CD8-positive, alpha-beta memory T cell (primary cell): ENCODE measurements at regions of chr15 and their contacts with region 1.

Region 1: DNA sequence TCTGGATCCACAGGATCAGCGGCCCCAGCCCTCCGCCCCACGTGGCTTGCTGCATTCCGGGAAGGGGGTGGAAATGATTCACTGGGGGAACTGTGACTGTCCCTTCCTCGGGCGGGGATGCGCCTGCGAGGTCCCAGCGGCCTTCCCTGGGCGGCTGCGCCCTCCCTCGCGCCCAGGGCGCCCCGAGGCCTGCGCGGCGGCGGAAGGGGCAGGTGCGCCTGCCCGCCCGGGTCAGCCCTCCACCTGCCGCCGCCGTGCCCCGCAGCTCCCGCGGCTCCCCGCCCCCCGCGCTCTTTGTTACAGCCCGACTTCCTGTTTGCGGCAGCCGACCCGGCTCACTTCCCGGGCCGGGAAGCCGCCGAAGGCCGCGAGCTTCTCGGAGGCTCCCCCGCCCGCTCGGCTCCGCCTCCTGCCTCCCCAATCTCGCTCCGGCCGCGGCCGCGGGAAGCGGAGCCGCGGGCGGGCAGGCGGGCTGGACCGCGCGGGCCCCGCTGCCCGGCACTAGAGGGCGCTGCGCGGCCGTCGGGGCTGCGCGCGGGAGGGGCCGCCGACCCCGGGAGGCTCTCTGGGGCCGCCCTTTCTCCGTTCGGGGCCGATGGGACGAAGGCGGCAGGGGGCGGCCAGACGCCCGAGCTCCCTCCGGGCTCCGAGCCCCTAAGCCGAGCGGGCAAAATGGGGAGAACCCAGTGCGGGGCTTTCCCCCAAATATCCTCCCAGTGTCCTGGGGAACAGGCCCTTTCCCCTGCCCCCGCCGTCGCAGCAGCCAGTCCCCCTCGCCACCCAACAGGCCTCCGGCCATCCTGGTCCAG is 11.5 kb upstream of the CHAC1 start:
- DNase-seq: peak; percentile 57 to 79 (median 70)
- H3K4me3 ChIP-seq: peak overlapping the region; percentile 73
- H3K4me3 Mint-ChIP-seq: peak overlapping the region; percentile 81 to 88 (median 82)
- H3K27ac ChIP-seq: peak overlapping the region; percentile 52
- H3K27ac Mint-ChIP-seq: peak overlapping the region in 5 of 8 donors; percentile 66 to 93 (median 76)
- H3K4me1 ChIP-seq: peaks cover 29% of the 10 kb centered on the region
- H3K4me1 Mint-ChIP-seq: peaks cover 18 to 35% (median 25%) of the 10 kb centered on the region in 3 donors
- H3K27me3 ChIP-seq: no peaks in the 10 kb centered on the region
- H3K27me3 Mint-ChIP-seq: no peaks in the 10 kb centered on the region

Region 2: GRCh38 chr15:40506964-40507571 is 434.7 kb before region 1 on chr15:
- CTCF ChIA-PET with region 1: no interaction called
- POLR2A ChIA-PET with region 1: no interaction called
- DNase-seq: peak; percentile 42 to 76 (median 50)
- H3K4me3 ChIP-seq: no peak overlapping the region
- H3K4me3 Mint-ChIP-seq: peak overlapping the region in 2 of 7 donors; percentile 32 to 52
- H3K27ac ChIP-seq: no peak overlapping the region
- H3K27ac Mint-ChIP-seq: no peak overlapping the region
- H3K4me1 ChIP-seq: peaks cover 5% of the 10 kb centered on the region
- H3K4me1 Mint-ChIP-seq: peaks cover 9 to 27% (median 19%) of the 10 kb centered on the region in 3 donors
- H3K27me3 ChIP-seq: peaks cover 19% of the 10 kb centered on the region
- H3K27me3 Mint-ChIP-seq: peaks cover 49 to 73% of the 10 kb centered on the region in 2 donors

Region 3: DNA sequence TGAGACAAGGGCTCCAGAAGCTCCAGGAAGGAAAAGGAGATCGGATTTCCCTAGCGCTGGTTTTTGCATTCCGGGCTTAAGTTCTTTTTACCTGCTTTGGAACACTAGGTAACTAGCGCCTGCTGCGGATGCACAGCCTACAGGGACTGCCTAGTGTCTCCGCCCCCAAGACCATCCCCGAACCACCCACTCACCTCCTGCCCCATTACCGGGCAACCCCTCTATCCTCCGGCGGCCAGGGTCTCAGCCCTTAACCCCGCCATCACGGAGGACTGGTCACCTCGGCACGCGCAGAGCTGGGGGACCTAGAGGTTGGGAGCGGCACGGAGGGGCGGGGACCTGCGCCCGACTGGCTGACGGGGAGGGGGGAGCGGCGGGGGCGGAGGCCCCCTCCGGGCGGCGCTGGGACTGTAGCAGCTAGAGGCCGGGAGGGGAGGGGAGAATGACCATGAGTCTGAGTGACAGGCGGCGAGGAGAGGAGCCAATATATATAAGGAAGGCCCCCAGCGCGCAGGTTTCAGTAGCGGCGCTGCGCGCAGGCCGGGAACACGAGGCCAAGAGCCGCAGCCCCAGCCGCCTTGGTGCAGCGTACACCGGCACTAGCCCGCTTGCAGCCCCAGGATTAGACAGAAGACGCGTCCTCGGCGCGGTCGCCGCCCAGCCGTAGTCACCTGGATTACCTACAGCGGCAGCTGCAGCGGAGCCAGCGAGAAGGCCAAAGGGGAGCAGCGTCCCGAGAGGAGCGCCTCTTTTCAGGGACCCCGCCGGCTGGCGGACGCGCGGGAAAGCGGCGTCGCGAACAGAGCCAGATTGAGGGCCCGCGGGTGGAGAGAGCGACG is 12.7 kb before region 1 on chr15 and contains the start of gene DLL4:
- CTCF ChIA-PET with region 1: interaction called, 10 read pairs
- POLR2A ChIA-PET with region 1: interaction called, 8 read pairs
- DNase-seq: peak in 3 of 5 donors; percentile 37 to 57 (median 38)
- H3K4me3 ChIP-seq: peak within 1 kb of the TSS; percentile 67
- H3K4me3 Mint-ChIP-seq: peak within 1 kb of the TSS; percentile 77 to 92 (median 82)
- H3K27ac ChIP-seq: no peak within 1 kb of the TSS
- H3K27ac Mint-ChIP-seq: peak within 1 kb of the TSS in 2 of 8 donors; percentile 15 to 70
- H3K4me1 ChIP-seq: peaks cover 37% of the 10 kb centered on the region
- H3K4me1 Mint-ChIP-seq: peaks cover 36 to 68% (median 41%) of the 10 kb centered on the region in 3 donors
- H3K27me3 ChIP-seq: peaks cover 48% of the 10 kb centered on the region
- H3K27me3 Mint-ChIP-seq: peaks cover 52 to 68% of the 10 kb centered on the region in 2 donors
- total RNA-seq, gene DLL4: not detected

Region 4: GRCh38 chr15:40952901-40953712 is 11.4 kb after region 1 on chr15 and contains the start of gene CHAC1:
- CTCF ChIA-PET with region 1: interaction called, 35 read pairs
- POLR2A ChIA-PET with region 1: interaction called, 24 read pairs
- DNase-seq: peak; percentile 89 to 96 (median 93)
- H3K4me3 ChIP-seq: peak within 1 kb of the TSS; percentile 86
- H3K4me3 Mint-ChIP-seq: peak within 1 kb of the TSS; percentile 89 to 96 (median 92)
- H3K27ac ChIP-seq: peak within 1 kb of the TSS; percentile 61
- H3K27ac Mint-ChIP-seq: peak within 1 kb of the TSS; percentile 61 to 89 (median 72)
- H3K4me1 ChIP-seq: peaks cover 16% of the 10 kb centered on the region
- H3K4me1 Mint-ChIP-seq: peaks cover 11 to 20% (median 12%) of the 10 kb centered on the region in 3 donors
- H3K27me3 ChIP-seq: no peaks in the 10 kb centered on the region
- H3K27me3 Mint-ChIP-seq: peaks cover 3 to 5% of the 10 kb centered on the region in 2 donors
- total RNA-seq, gene CHAC1: 15.1 to 16.7 TPM

Region 5: GRCh38 chr15:42215913-42216829 is 1274.4 kb after region 1 on chr15:
- CTCF ChIA-PET with region 1: no interaction called
- POLR2A ChIA-PET with region 1: no interaction called
- DNase-seq: no peak
- H3K4me3 ChIP-seq: no peak overlapping the region
- H3K4me3 Mint-ChIP-seq: no peak overlapping the region
- H3K27ac ChIP-seq: no peak overlapping the region
- H3K27ac Mint-ChIP-seq: peak overlapping the region in 4 of 8 donors; percentile 21 to 74 (median 34)
- H3K4me1 ChIP-seq: no peaks in the 10 kb centered on the region
- H3K4me1 Mint-ChIP-seq: peaks cover 0 to 3% (median 0%) of the 10 kb centered on the region in 3 donors
- H3K27me3 ChIP-seq: no peaks in the 10 kb centered on the region
- H3K27me3 Mint-ChIP-seq: no peaks in the 10 kb centered on the region